ENCODE measurements at regions of chr12 and their contacts with region 1.

Region 1: GRCh38 chr12:108562348-108563135 is at the start of gene ISCU:
- DNase-seq: peak; percentile 65
- H3K4me3 ChIP-seq: peak within 1 kb of the TSS; percentile 97
- CTCF ChIP-seq: no peak

Region 2: GRCh38 chr12:108576660-108577234 is 14.2 kb after region 1 on chr12:
- CTCF ChIA-PET with region 1: interaction called, 33 read pairs
- POLR2A ChIA-PET with region 1: no interaction called
- DNase-seq: no peak
- H3K4me3 ChIP-seq: no peak overlapping the region
- CTCF ChIP-seq: no peak

Region 3: GRCh38 chr12:108627134-108627920 is 64.8 kb after region 1 on chr12:
- CTCF ChIA-PET with region 1: interaction called, 1,115 read pairs
- POLR2A ChIA-PET with region 1: interaction called, 4 read pairs
- DNase-seq: no peak
- H3K4me3 ChIP-seq: no peak overlapping the region
- CTCF ChIP-seq: no peak

Region 4: GRCh38 chr12:108633534-108634248 is 71.1 kb after region 1 on chr12 and contains the start of gene SELPLG:
- CTCF ChIA-PET with region 1: interaction called, 21 read pairs
- POLR2A ChIA-PET with region 1: interaction called, 4 read pairs
- DNase-seq: no peak
- H3K4me3 ChIP-seq: no peak within 1 kb of the TSS
- CTCF ChIP-seq: no peak

Region 5: DNA sequence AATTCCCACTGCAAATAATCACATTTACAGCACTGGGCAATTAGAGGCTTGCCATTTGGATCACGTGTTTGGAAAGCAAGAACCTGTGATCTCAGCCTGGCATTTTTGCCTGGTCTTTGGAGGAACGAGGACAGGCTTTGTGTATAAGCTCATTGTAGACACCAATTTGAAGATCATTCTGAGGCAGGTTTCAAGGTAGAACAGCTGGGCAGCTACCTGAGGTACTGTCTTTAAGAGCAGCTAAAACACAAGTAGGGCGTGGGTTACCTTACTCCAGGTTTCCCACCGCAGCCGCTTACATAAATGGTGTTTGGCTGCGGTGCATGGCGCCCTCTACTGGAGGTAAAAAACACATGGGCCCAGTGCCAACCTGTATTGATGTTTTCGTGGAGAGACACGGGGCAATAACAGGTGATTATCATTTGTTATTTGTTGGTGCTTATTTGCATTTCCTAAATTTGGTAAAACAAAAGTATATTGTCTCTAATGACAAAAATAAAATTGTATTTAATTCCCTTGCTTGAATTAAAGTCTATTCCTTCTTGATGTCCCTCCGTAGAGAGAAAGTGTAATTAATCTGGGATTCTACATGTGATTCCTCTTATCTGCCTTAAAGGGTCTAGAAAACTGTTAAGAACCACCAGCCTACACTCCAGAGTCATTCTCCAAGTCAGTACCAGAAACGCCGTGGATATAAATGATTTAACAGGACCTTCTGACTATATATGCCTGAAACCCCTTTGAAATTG is 388.6 kb after region 1 on chr12:
- CTCF ChIA-PET with region 1: interaction called, 11 read pairs
- POLR2A ChIA-PET with region 1: no interaction called
- DNase-seq: no peak
- H3K4me3 ChIP-seq: no peak overlapping the region
- CTCF ChIP-seq: peak; percentile 72

Region 6: GRCh38 chr12:109093022-109093918 is 530.7 kb after region 1 on chr12 and contains the start of gene ALKBH2:
- CTCF ChIA-PET with region 1: interaction called, 29 read pairs
- POLR2A ChIA-PET with region 1: interaction called, 3 read pairs
- DNase-seq: peak; percentile 34
- H3K4me3 ChIP-seq: peak within 1 kb of the TSS; percentile 78
- CTCF ChIP-seq: peak; percentile 99

Measured in AG04449 (cell line).